CD4-positive, alpha-beta memory T cell (primary cell): ENCODE measurements at regions of chr17 and their contacts with region 1.

Region 1: DNA sequence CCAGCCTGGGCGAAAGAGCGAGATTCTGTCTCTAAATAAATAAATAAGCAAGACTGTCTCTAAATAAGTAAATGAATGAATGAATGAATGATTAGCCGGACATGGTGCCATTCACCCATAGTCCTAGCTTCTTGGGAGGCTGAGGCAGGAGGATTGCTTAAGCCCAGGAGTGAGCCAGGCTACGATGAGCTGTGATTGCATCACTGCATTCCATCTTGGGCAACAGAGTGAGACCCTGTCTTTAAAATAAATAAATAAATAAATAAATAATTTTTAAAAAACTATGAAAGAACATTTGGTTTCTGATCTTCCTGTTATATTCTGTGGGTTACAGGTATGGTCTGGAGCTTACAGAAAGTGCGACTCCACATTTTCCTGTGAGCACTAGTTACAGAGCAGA is 65.0 kb downstream of the C17orf58 start:
- DNase-seq: no peak
- H3K4me3 ChIP-seq: no peak overlapping the region
- H3K4me3 Mint-ChIP-seq: no peak overlapping the region
- H3K27ac ChIP-seq: no peak overlapping the region
- H3K27ac Mint-ChIP-seq: no peak overlapping the region
- H3K4me1 ChIP-seq: no peaks in the 10 kb centered on the region
- H3K4me1 Mint-ChIP-seq: no peaks in the 10 kb centered on the region
- H3K27me3 ChIP-seq: no peaks in the 10 kb centered on the region
- H3K27me3 Mint-ChIP-seq: no peaks in the 10 kb centered on the region

Region 2: GRCh38 chr17:67884741-67885140 is 46.5 kb before region 1 on chr17:
- CTCF ChIA-PET with region 1: no interaction called
- POLR2A ChIA-PET with region 1: no interaction called
- intact Hi-C with region 1: no loop called
- DNase-seq: no peak
- H3K4me3 ChIP-seq: no peak overlapping the region
- H3K4me3 Mint-ChIP-seq: no peak overlapping the region
- H3K27ac ChIP-seq: no peak overlapping the region
- H3K27ac Mint-ChIP-seq: peak overlapping the region in 1 of 7 donors; percentile 7
- H3K4me1 ChIP-seq: no peaks in the 10 kb centered on the region
- H3K4me1 Mint-ChIP-seq: peaks cover under 1 to 12% (median 7%) of the 10 kb centered on the region in 4 donors
- H3K27me3 ChIP-seq: no peaks in the 10 kb centered on the region
- H3K27me3 Mint-ChIP-seq: no peaks in the 10 kb centered on the region

Region 3: DNA sequence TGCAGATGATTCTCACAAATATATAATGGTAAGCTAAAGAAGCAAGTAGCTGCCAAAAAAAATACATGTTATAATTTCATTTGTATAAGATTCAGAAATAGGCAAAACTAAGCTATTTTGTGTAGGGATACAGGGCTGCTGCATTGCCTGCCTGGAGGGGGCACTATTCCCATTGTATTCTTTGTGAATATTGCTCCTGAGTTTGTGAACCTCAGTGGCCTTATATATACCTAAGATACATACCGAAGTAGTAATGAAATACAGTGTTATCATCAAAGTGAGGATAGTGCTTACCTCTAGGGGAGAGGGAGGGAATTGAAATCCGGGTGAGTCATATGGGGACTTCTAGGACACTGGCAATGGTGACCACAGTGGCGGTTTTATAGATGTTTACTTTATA is 11.6 kb after region 1 on chr17:
- CTCF ChIA-PET with region 1: interaction called, 12 read pairs
- POLR2A ChIA-PET with region 1: interaction called, 3 read pairs
- intact Hi-C with region 1: no loop called
- DNase-seq: no peak
- H3K4me3 ChIP-seq: no peak overlapping the region
- H3K4me3 Mint-ChIP-seq: no peak overlapping the region
- H3K27ac ChIP-seq: no peak overlapping the region
- H3K27ac Mint-ChIP-seq: peak overlapping the region in 1 of 7 donors; percentile 78
- H3K4me1 ChIP-seq: no peaks in the 10 kb centered on the region
- H3K4me1 Mint-ChIP-seq: peaks cover 0 to 2% (median under 1%) of the 10 kb centered on the region in 4 donors
- H3K27me3 ChIP-seq: no peaks in the 10 kb centered on the region
- H3K27me3 Mint-ChIP-seq: no peaks in the 10 kb centered on the region